ENCODE measurements at regions of chr19 and their contacts with region 1.

Region 1: DNA sequence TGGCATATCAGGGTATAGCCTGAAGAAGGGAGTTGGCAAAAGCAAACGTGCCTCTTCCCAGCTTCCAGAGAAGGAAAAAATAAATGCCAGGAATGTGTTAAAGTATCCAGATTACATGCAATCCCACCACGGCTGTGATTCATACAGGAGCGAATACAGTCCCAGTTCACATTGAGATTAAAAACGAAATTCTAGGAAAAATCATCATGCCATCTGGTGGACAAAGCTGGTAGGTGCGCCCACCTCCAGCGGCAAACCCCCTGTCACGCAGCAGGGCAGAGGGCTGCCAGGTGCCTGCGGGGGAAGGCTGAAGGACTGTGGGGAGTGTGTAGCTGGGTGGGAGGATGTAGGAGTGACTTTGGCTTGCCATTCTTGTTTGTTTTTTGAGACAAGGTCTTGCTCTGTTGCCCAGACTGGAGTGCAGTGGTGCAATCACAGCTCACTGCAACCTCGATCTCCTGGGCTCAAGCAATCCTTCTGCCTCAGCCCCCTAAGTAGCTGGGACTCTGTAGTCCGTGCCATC is 6.4 kb upstream of the DMWD start:
- DNase-seq: peak; percentile 54
- H3K4me3 ChIP-seq: no peak overlapping the region
- CTCF ChIP-seq: peak; percentile 76

Region 2: DNA sequence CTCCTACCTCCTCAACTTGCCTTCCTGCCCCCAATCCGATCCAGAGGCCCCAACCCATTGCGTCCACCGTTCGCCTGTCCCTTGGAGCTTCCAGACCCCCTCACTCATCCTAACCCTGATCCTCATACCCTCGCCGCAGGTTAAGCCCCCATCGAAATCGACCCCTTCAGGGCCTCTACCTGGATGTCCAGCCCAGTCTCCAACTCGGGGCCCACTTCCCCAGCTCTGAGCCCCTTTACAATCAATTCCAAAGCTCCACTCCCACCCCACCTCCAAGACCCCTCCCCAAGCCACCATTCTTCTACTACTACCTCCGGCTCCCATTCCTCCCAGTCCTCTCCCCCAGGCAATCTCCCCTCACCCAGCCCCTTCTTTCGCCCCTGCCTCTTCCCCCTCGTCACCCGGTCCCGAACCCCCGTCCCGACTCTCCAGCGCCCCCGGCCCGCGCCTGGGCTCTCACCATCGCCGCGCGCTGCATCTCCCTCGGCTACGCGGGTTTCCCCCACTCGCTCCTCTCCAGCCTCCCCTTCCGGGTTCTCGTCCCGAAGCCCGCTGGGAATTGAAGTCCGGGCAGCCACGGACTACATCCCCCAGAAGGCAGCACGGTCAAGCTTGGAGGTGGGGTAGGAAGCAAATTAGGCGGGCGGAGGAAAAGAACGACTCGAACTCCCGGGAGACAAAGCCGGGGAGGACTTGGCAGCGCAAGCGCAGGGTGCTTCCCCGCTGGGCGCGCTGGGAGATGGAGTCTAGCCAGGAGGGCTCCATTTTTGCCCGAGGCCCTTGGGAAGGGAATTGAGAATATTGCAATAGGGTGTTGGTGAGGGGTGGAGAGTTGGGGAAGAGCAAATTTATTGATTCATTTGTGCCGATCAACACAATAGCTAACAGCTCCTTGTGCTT is 68.4 kb before region 1 on chr19 and contains the start of gene FBXO46:
- CTCF ChIA-PET with region 1: interaction called, 11 read pairs
- POLR2A ChIA-PET with region 1: no interaction called
- DNase-seq: peak; percentile 90
- H3K4me3 ChIP-seq: peak within 1 kb of the TSS; percentile 88
- CTCF ChIP-seq: peak; percentile 43

Region 3: DNA sequence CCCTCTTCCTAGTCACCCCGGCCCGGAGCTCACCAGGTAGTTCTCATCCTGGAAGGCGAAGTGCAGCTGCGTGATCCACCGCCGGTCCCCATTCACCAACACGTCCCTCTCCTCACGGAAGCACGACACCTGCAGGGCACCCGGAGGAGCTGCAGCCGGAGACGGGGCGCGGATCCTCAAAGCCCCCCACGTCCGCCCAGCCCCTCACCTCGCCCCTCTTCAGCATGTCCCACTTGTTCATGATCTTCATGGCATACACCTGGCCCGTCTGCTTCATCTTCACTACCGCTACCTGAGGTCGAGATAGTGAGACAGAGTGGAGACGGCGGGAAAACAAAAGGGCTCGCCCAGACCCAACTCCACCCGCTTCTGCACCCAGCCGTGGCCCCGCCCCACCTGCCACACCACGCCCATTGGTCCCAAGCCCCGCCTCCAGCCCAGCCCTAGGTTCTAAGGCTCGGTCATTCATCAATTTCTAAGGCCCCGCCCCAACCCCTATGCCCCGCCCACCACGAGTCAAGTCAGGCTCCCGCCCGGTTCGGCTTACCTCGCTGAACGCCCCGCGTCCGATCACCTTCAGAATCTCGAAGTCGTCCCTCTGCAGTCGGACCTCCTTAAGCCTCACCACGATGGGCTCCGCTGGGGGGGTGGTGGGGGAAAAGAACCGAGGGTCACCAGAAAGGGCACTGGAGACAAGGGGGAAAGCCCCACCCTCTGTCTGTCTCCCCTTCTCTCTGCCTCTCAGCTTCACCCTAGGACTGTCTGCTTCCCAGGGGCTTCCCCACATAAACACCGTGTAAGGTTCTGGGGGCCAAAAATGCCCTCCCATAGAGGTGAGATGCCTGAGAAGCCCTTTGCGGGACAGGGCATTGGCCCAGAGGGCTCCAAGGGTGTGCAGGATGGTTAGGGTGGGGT is 19.6 kb before region 1 on chr19:
- CTCF ChIA-PET with region 1: interaction called, 170 read pairs
- POLR2A ChIA-PET with region 1: interaction called, 6 read pairs
- DNase-seq: no peak
- H3K4me3 ChIP-seq: peak overlapping the region; percentile 23
- CTCF ChIP-seq: peak; percentile 40

Region 4: DNA sequence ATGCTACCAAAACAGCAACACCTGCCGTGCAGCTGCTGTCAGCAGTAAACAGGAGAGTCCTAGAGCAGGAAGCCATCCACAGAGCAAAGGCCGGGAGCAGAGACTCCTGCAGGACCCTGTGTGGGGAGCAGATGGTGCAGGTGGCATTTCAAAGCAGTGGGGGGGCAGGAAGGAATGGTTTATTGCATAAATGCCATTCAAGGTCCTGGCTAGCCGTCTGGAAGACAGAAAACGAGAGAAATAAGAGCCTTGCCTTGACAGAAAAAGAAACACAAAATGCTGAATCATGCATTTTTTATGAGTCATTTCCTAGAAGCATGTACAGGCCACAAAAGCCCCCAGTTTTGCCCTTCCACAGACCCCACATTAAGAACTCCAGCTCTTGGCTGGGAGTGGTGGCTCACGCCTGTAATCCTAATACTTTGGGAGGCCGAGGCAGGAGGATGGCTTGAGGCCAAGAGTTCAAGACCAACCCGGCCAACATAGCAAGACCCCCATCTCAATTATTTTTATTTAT is 10.6 kb after region 1 on chr19:
- CTCF ChIA-PET with region 1: interaction called, 42 read pairs
- POLR2A ChIA-PET with region 1: no interaction called
- DNase-seq: peak; percentile 23
- H3K4me3 ChIP-seq: no peak overlapping the region; the same call in 1 of the 2 replicates
- CTCF ChIP-seq: no peak

Region 5: GRCh38 chr19:45908956-45909355 is 109.9 kb after region 1 on chr19:
- CTCF ChIA-PET with region 1: no interaction called
- POLR2A ChIA-PET with region 1: no interaction called
- DNase-seq: no peak
- H3K4me3 ChIP-seq: no peak overlapping the region
- CTCF ChIP-seq: no peak

Measured in AG04449 (cell line).